ENCODE measurements at regions of chr12 and their contacts with region 1.

Region 1: GRCh38 chr12:31238764-31239387 is 87.1 kb downstream of the SINHCAF start:
- DNase-seq: peak in 8 of 9 experiments; percentile 8 to 67 (median 50)
- ATAC-seq: peak; percentile 44
- H3K4me3 ChIP-seq: no peak overlapping the region
- H3K4me3 Mint-ChIP-seq: peak overlapping the region; percentile 26
- H3K27ac ChIP-seq: no peak overlapping the region
- H3K27ac Mint-ChIP-seq: no peak overlapping the region
- H3K4me1 ChIP-seq: no peaks in the 10 kb centered on the region
- H3K4me1 Mint-ChIP-seq: peaks cover 2% of the 10 kb centered on the region
- H3K27me3 ChIP-seq: peaks cover 0 to 3% of the 10 kb centered on the region in 2 experiments
- H3K27me3 Mint-ChIP-seq: peaks cover 25% of the 10 kb centered on the region
- CTCF ChIP-seq: peak; percentile 45

Region 2: GRCh38 chr12:31117203-31118011 is 121.5 kb before region 1 on chr12:
- CTCF ChIA-PET with region 1: no interaction called
- POLR2A ChIA-PET with region 1: no interaction called
- intact Hi-C with region 1: loop called in 1 of 2 experiments (anchors 5 kb)
- DNase-seq: peak; percentile 39 to 79 (median 68)
- ATAC-seq: peak; percentile 83
- H3K4me3 ChIP-seq: peak overlapping the region; percentile 52
- H3K4me3 Mint-ChIP-seq: peak overlapping the region; percentile 81
- H3K27ac ChIP-seq: no peak overlapping the region
- H3K27ac Mint-ChIP-seq: no peak overlapping the region
- H3K4me1 ChIP-seq: peaks cover 16% of the 10 kb centered on the region
- H3K4me1 Mint-ChIP-seq: peaks cover 4% of the 10 kb centered on the region
- H3K27me3 ChIP-seq: peaks cover 0 to 29% of the 10 kb centered on the region in 2 experiments
- H3K27me3 Mint-ChIP-seq: no peaks in the 10 kb centered on the region
- CTCF ChIP-seq: peak; percentile 57

Region 3: GRCh38 chr12:31226639-31227038 is 12.2 kb before region 1 on chr12:
- CTCF ChIA-PET with region 1: no interaction called
- POLR2A ChIA-PET with region 1: no interaction called
- intact Hi-C with region 1: no loop called
- DNase-seq: no peak
- ATAC-seq: no peak
- H3K4me3 ChIP-seq: no peak overlapping the region
- H3K4me3 Mint-ChIP-seq: no peak overlapping the region
- H3K27ac ChIP-seq: no peak overlapping the region
- H3K27ac Mint-ChIP-seq: no peak overlapping the region
- H3K4me1 ChIP-seq: no peaks in the 10 kb centered on the region
- H3K4me1 Mint-ChIP-seq: no peaks in the 10 kb centered on the region
- H3K27me3 ChIP-seq: no peaks in the 10 kb centered on the region
- H3K27me3 Mint-ChIP-seq: peaks cover 2% of the 10 kb centered on the region
- CTCF ChIP-seq: no peak